ENCODE measurements at regions of chr15 and their contacts with region 1.

Region 1: DNA sequence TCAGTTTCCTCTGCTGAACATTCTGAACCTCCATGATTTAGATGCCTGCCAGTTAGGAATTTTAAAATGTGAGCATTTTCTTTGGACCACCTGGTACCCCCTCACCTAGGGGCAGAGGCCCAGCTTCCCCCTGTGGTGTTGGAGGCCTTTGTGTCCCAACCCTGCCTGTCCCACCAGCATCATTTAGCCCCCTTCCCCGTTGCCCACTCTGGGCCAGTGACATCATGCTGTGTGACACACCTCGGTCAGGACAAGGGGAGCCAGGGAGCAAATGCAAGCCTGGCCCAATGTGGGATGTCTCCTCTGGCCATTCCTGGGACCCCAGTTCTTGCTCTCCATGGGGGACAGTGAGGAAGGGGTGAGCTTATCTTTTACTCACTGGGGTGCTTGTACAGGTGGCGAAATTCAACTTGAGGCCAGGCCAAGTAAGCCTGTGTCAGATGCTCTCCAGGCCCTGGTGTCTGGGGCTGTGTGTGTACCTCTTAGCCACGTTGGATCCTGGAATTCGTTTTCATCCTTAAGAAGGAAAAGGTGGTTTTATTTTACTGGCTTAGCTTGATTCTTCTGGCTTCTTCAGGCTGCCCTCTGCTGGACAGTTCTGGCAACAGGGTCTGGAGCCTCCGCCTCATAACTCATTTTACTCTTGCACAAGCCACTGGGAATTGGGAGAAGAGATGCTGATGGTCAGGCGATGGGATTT is 49.7 kb upstream of the MYZAP start:
- DNase-seq: peak; percentile 82
- H3K4me3 Mint-ChIP-seq: no peak overlapping the region
- H3K27ac Mint-ChIP-seq: no peak overlapping the region
- H3K4me1 Mint-ChIP-seq: no peaks in the 10 kb centered on the region
- H3K27me3 Mint-ChIP-seq: peaks cover 37% of the 10 kb centered on the region
- CTCF ChIP-seq: peak; percentile 79

Region 2: DNA sequence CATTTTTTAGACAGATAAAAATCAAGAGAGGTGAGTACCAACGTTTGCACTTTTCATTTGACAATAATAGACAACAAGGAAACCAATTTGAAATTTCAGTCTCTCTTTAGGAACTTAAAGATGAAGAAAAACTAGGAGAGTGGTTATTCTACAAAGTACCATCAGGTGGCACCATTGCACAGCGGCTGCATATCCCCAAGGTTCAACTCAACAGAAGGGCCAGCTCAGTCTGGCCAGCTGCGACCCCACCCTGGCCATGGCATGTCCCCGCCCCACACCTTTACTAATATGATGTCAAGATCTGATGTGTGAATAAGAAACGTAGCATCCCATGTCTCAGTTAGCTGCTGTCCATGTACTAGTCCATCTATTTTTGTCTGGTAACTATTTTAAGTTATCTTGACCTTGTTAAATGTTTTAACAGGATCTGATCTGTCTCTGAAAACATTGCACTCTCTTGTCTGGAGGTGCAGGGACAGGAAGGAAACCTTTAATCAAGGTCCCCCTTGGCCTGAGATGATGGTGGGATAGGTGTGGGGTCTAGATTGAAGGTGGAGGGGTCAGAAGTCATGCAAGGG is 201.2 kb before region 1 on chr15:
- CTCF ChIA-PET with region 1: interaction called, 31 read pairs
- intact Hi-C with region 1: loop called (anchors 1 kb)
- DNase-seq: peak; percentile 76
- H3K4me3 Mint-ChIP-seq: no peak overlapping the region
- H3K27ac Mint-ChIP-seq: no peak overlapping the region
- H3K4me1 Mint-ChIP-seq: peaks cover 25% of the 10 kb centered on the region
- H3K27me3 Mint-ChIP-seq: no peaks in the 10 kb centered on the region
- CTCF ChIP-seq: peak; percentile 86

Region 3: GRCh38 chr15:57551717-57552677 is 10.0 kb after region 1 on chr15:
- CTCF ChIA-PET with region 1: interaction called, 20 read pairs
- intact Hi-C with region 1: no loop called
- DNase-seq: peak; percentile 78
- H3K4me3 Mint-ChIP-seq: no peak overlapping the region
- H3K27ac Mint-ChIP-seq: peak overlapping the region; percentile 61
- H3K4me1 Mint-ChIP-seq: peaks cover 64% of the 10 kb centered on the region
- H3K27me3 Mint-ChIP-seq: no peaks in the 10 kb centered on the region
- CTCF ChIP-seq: no peak

Measured in Calu3 (cell line).